ENCODE measurements at regions of chr11 and their contacts with region 1.

Region 1: GRCh38 chr11:10214002-10214401 is 80.0 kb downstream of the SBF2 start:
- DNase-seq: peak in 1 of 2 experiments; percentile 17
- H3K4me3 ChIP-seq: no peak overlapping the region
- H3K4me3 Mint-ChIP-seq: no peak overlapping the region
- H3K27ac Mint-ChIP-seq: no peak overlapping the region
- H3K4me1 ChIP-seq: 0 out of 2 replicates have a peak, but pooled peaks cover 4% of the 10 kb centered on the region
- H3K4me1 Mint-ChIP-seq: peaks cover 5% of the 10 kb centered on the region
- H3K27me3 ChIP-seq: no peaks in the 10 kb centered on the region
- H3K27me3 Mint-ChIP-seq: no peaks in the 10 kb centered on the region
- CTCF ChIP-seq: no peak

Region 2: GRCh38 chr11:9962722-9963121 is 251.3 kb before region 1 on chr11:
- CTCF ChIA-PET with region 1: no interaction called
- POLR2A ChIA-PET with region 1: no interaction called
- intact Hi-C with region 1: no loop called
- DNase-seq: no peak
- H3K4me3 ChIP-seq: no peak overlapping the region
- H3K4me3 Mint-ChIP-seq: no peak overlapping the region
- H3K27ac Mint-ChIP-seq: no peak overlapping the region
- H3K4me1 ChIP-seq: no peaks in the 10 kb centered on the region
- H3K4me1 Mint-ChIP-seq: no peaks in the 10 kb centered on the region
- H3K27me3 ChIP-seq: no peaks in the 10 kb centered on the region
- H3K27me3 Mint-ChIP-seq: no peaks in the 10 kb centered on the region
- CTCF ChIP-seq: no peak

Region 3: DNA sequence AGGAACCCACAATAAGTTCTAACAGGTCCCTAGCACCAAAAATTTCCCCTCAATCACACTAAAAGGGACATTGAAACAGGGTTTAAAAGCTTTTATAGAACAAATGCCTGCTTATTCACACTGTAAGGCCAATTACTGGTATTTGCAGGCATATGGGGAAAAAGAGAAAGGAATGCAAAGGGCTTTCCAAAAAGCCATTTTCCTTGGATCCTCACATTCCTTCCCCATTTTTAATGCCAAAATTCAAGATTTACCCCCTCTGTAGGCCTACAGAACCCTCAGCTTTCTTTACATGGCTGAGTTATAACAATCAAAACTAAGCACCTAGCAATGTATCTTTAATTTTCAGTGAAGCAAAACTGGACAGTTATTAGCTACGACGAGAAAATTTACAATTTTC is 22.0 kb before region 1 on chr11:
- CTCF ChIA-PET with region 1: no interaction called
- POLR2A ChIA-PET with region 1: no interaction called
- intact Hi-C with region 1: loop called (anchors 1 kb)
- DNase-seq: no peak
- H3K4me3 ChIP-seq: no peak overlapping the region
- H3K4me3 Mint-ChIP-seq: no peak overlapping the region
- H3K27ac Mint-ChIP-seq: no peak overlapping the region
- H3K4me1 ChIP-seq: no peaks in the 10 kb centered on the region
- H3K4me1 Mint-ChIP-seq: no peaks in the 10 kb centered on the region
- H3K27me3 ChIP-seq: no peaks in the 10 kb centered on the region
- H3K27me3 Mint-ChIP-seq: no peaks in the 10 kb centered on the region
- CTCF ChIP-seq: no peak